Panc1 (cell line): ENCODE measurements at regions of chr7 and their contacts with region 1.

Region 1: DNA sequence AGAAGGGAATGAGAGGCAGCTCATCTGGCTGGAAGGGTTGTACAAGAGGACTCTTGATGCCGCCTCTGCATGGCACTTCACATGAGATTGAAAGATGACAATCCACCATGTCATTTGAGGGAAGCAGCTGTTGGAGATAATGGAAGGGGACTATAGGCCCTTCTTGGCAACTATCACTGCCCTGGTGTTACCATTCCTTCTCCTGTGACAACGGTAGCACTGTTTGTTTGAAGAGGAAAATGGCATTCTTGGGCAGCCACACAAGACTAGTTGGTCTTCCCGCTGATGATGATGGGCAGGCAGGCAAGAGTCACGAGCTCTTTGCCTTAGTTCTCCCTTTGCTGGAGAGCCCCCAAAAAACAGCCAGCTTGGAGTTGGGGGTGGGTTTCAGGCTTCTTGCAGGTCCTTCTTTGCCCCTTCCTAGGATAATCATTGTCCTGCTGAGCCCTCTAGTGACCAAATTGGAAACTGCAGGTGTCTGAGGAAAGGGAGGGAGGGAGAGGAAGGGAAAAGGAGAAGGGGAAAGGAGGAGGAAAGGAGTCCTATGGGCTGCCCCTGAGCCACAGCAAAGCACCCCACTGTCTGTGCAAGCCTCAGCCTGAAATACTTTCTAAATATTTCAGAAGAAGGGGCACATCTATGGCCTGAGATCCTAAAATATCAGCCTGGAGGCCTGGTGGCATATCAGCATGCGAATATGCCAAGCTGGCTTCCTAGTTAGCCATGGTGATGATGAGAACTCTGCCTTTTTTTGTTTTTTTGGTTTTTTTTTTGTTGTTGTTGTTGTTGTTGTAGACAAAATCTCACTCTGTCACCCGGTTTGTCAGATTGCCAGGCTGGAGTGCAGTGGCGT is 165.6 kb upstream of the KMT2E start:
- DNase-seq: peak; percentile 45
- ATAC-seq: peak; percentile 86
- H3K4me3 ChIP-seq: no peak overlapping the region
- H3K27ac ChIP-seq: no peak overlapping the region
- H3K4me1 ChIP-seq: no peaks in the 10 kb centered on the region
- H3K27me3 ChIP-seq: peaks cover 5% of the 10 kb centered on the region; the same call in 1 of the 2 replicates
- CTCF ChIP-seq: peak; percentile 93

Region 2: GRCh38 chr7:104231054-104232046 is 617.0 kb before region 1 on chr7:
- CTCF ChIA-PET with region 1: no interaction called
- POLR2A ChIA-PET with region 1: no interaction called
- in situ Hi-C with region 1: no loop called
- intact Hi-C with region 1: loop called (anchors 5 kb)
- DNase-seq: peak; percentile 57
- ATAC-seq: peak; percentile 98
- H3K4me3 ChIP-seq: no peak overlapping the region
- H3K27ac ChIP-seq: no peak overlapping the region
- H3K4me1 ChIP-seq: no peaks in the 10 kb centered on the region
- H3K27me3 ChIP-seq: peaks cover 9% of the 10 kb centered on the region
- CTCF ChIP-seq: peak; percentile 89

Region 3: DNA sequence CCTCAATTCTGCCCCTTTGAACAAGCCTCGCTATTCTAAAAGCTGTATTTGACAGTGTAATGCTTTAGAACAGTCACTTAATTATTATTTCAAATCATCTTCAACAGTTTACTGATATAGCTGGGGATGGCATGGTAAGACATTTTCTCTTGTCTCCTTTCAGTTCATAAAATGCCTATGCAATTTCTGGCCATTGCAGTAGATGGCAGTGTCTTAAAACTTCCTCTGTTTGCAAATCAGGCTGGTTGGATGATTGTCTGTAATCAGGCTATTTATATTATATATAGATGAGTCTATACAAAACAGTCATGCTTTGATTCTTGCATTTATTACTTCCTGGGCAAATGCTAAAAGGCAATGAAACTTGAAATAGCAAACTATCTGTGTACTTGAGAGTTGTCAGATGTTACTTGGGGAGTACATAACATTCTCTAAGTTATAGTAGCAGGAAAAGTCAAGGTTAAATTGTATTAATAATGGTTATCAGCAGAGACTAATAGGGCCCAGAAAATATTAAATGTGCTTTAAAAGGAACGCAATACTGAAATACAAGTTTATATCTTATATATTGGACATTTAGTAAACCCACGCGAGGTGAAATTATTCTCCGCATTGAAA is 575.5 kb before region 1 on chr7:
- CTCF ChIA-PET with region 1: no interaction called
- POLR2A ChIA-PET with region 1: no interaction called
- in situ Hi-C with region 1: no loop called
- intact Hi-C with region 1: loop called (anchors 2 kb)
- DNase-seq: no peak
- ATAC-seq: no peak
- H3K4me3 ChIP-seq: no peak overlapping the region
- H3K27ac ChIP-seq: no peak overlapping the region
- H3K4me1 ChIP-seq: no peaks in the 10 kb centered on the region
- H3K27me3 ChIP-seq: no peaks in the 10 kb centered on the region; the same call in 1 of the 2 replicates
- CTCF ChIP-seq: peak; percentile 72; the same call in 1 of the 2 replicates

Region 4: DNA sequence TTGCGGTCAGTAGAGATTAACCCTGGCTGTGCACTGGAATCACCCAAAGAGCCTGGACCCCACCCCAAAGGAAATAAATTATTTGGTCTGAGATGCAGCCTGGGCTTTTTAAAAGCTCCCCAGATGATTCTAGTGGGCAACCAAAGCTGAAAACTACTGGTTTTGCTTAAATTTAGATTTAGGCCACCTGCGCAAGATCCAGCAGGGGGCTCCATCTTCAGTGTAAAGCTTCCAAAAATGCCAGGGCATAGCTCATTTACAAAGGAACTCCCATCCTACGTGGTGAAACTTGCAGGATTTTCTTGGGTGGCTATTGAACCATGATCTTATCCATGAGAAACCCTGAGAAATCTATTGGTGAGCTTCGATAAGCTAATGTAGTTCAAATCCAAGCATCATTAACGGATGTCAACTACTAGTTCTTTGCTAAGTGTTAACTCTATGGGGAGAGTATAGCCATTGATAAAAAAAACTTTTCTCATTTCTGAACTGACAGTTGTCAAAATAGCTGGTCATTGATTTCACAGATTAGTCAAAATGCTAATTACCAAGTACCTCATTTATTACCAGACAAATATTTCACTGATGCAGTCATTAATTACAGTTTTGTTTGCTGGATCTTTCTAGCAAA is 204.7 kb before region 1 on chr7:
- CTCF ChIA-PET with region 1: no interaction called
- POLR2A ChIA-PET with region 1: no interaction called
- in situ Hi-C with region 1: no loop called
- intact Hi-C with region 1: loop called (anchors 2 kb)
- DNase-seq: no peak
- ATAC-seq: no peak
- H3K4me3 ChIP-seq: no peak overlapping the region
- H3K27ac ChIP-seq: no peak overlapping the region
- H3K4me1 ChIP-seq: no peaks in the 10 kb centered on the region
- H3K27me3 ChIP-seq: peaks cover 9% of the 10 kb centered on the region; the same call in 1 of the 2 replicates
- CTCF ChIP-seq: peak; percentile 72

Region 5: DNA sequence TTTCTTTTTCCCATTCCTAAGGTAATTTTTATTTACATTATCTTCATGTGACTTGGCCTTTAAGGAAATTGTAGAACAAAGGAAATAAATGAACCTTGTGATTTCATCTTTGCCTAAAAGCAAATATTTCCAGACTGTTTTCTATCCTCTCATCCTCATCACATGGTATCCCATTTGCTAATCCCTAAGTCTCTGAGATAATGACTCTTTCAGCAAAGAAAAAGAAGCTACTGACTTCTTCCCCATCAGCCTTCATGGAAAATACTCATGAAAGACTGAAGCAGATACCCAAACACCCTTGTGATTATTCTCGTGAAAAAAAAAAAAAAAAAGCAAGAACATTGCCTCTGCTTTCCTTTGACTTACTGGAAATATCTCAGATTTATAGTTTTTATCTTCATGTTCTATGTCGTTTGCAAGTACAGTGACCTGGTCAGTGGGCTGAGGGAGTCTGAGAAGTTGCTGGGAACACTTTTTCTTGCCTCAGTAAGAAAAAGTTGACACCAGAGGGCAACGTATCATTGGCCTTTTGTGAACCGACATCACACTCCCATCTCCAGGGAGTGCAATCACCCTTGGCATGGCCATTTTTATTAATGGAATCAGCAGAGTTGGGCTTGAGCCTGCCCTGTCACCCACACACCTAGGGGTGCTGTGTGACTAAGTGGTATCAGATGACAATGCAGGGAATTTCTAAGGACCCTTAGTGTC is 80.4 kb before region 1 on chr7:
- CTCF ChIA-PET with region 1: no interaction called
- POLR2A ChIA-PET with region 1: no interaction called
- in situ Hi-C with region 1: no loop called
- intact Hi-C with region 1: no loop called
- DNase-seq: no peak
- ATAC-seq: no peak
- H3K4me3 ChIP-seq: no peak overlapping the region
- H3K27ac ChIP-seq: no peak overlapping the region
- H3K4me1 ChIP-seq: no peaks in the 10 kb centered on the region
- H3K27me3 ChIP-seq: 0 out of 2 replicates have a peak, but pooled peaks cover 2% of the 10 kb centered on the region
- CTCF ChIP-seq: no peak

Region 6: GRCh38 chr7:104883718-104884452 is 35.5 kb after region 1 on chr7:
- CTCF ChIA-PET with region 1: no interaction called
- POLR2A ChIA-PET with region 1: no interaction called
- in situ Hi-C with region 1: no loop called
- intact Hi-C with region 1: no loop called
- DNase-seq: peak; percentile 51
- ATAC-seq: peak; percentile 98
- H3K4me3 ChIP-seq: no peak overlapping the region
- H3K27ac ChIP-seq: no peak overlapping the region
- H3K4me1 ChIP-seq: no peaks in the 10 kb centered on the region
- H3K27me3 ChIP-seq: 0 out of 2 replicates have a peak, but pooled peaks cover 2% of the 10 kb centered on the region
- CTCF ChIP-seq: peak; percentile 92

Region 7: DNA sequence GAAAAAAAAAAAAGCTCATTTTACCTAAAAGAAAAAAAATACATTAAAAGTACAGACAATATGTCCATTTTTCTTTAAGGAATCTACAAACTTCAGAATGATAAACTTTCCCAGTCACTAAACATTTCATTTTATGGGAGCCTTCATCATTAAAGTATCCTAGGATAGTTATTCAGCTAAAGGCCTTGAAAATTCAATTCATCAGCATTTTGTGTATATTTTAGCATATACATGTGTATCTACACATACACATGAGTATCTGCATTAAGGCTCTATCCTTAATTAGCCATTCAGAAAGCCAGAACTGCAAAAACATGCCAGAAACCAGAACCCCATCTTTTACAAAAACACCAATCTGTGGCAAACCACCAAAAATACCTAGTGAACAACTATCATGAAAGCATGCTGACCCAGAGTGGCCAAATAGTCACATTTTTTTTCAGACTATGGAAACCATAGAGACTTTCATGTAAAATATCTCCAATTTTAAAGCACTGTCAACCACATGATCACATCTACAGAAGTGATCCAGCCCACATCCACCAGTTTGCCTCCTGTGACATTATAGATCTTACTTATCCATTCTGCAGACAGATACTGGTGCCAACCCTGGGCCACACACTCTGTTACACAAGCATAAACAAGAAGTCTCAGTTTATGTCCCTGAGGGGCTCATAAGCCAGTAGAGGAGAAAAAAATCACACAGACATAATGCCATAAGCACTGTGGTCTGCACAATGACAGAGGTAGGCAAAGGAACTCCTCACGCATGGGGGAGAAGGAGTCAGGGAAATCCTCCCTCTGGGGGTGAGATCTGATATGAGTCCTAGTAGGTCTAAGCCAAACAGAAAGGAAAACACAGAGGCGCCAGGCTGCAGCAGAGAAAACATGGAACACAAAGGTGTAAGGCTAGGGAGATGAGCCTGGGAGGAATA is 461.1 kb after region 1 on chr7:
- CTCF ChIA-PET with region 1: no interaction called
- POLR2A ChIA-PET with region 1: no interaction called
- in situ Hi-C with region 1: no loop called
- intact Hi-C with region 1: no loop called
- DNase-seq: no peak
- ATAC-seq: peak; percentile 85
- H3K4me3 ChIP-seq: no peak overlapping the region
- H3K27ac ChIP-seq: peak overlapping the region; percentile 59; the same call in 1 of the 2 replicates
- H3K4me1 ChIP-seq: peaks cover 50% of the 10 kb centered on the region
- H3K27me3 ChIP-seq: no peaks in the 10 kb centered on the region
- CTCF ChIP-seq: no peak; the same call in 1 of the 2 replicates